ENCODE measurements at regions of chr10 and their contacts with region 1.

Region 1: DNA sequence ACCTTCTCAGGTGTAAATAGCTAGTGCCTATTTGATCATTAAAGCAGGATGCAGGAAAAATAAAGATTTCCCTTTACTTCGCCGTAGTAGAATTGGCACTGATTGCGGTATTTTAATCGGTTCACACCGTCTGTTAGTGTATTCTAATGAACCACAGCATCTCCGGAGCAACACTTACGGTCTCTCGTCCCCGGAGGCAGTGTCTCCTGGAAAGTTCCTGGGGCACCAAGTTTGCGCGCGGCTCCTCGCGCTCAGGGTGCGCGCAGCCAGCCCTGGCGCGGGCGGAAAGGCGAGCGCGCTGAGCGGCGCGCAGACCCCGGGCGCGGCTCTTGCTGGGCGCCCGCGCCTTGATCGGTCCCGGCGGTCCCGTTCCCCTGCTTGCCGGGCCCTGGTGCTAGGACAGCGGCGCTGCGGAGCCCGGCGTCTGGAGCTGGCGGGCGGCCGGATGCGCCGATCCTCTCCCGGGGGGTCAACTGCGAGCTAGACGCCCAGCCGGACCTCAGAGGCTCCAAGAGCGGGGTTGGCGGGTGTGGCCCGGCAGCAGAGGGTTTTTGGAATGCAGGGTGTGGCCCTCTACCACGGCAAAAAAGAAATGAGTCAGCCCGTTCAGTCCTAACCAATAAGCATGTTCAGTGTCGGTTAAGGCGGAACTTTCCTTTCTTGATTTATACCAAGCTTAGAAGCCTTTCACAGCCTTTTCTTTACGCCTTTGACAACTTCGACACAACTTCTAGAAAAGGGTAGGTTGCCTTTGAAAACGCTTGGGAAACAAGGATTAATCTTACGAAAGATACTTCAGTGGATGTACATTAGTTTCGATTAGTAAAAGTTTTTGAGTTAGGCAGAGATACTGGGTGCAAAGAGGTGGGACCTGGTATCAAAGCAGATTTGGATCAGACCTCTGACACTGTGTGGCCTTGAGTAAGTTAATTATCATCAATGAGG is 166.8 kb upstream of the ASAH2 start:
- DNase-seq: peak; percentile 91
- H3K4me3 Mint-ChIP-seq: peak overlapping the region; percentile 83
- H3K27ac Mint-ChIP-seq: peak overlapping the region; percentile 91
- H3K4me1 Mint-ChIP-seq: peaks cover 11% of the 10 kb centered on the region
- H3K27me3 Mint-ChIP-seq: no peaks in the 10 kb centered on the region
- CTCF ChIP-seq: no peak

Region 2: DNA sequence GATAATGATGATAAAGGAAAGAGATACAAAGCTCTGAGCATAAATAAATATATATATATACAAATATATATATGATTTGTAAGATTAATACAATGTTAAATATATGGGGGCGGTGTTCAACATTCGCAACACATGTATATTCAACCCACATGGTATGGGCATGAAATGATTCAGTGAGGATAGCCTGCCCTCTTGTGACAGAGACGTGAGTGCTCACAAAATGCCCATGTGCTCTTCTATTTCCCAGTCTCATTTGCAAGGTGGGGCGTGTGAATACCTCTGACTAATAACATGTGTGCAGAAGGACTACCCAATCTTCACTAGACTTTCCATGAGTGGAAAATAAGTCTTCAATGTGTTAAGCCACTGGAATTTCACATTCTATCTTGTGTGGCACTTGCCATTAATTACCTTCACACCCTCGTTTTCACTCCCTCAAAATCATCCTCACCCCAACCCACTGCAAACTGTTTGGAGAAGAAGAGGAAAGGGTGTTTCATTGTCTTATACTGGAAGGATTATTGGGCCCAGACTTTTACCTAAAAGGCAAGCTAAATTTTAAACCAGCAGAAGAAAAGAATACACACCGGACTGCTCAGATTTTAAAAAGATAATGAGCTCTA is 193.7 kb before region 1 on chr10:
- CTCF ChIA-PET with region 1: interaction called, 4 read pairs
- POLR2A ChIA-PET with region 1: no interaction called
- intact Hi-C with region 1: loop called (anchors 2 kb)
- DNase-seq: peak; percentile 84
- H3K4me3 Mint-ChIP-seq: no peak overlapping the region
- H3K27ac Mint-ChIP-seq: no peak overlapping the region
- H3K4me1 Mint-ChIP-seq: no peaks in the 10 kb centered on the region
- H3K27me3 Mint-ChIP-seq: peaks cover 46% of the 10 kb centered on the region
- CTCF ChIP-seq: peak; percentile 65

Region 3: GRCh38 chr10:50291261-50291850 is 126.8 kb before region 1 on chr10:
- CTCF ChIA-PET with region 1: interaction called, 3 read pairs
- POLR2A ChIA-PET with region 1: interaction called, 3 read pairs
- intact Hi-C with region 1: loop called (anchors 1 kb)
- DNase-seq: peak; percentile 31
- H3K4me3 Mint-ChIP-seq: no peak overlapping the region
- H3K27ac Mint-ChIP-seq: no peak overlapping the region
- H3K4me1 Mint-ChIP-seq: peaks cover 4% of the 10 kb centered on the region
- H3K27me3 Mint-ChIP-seq: no peaks in the 10 kb centered on the region
- CTCF ChIP-seq: peak; percentile 29

Region 4: DNA sequence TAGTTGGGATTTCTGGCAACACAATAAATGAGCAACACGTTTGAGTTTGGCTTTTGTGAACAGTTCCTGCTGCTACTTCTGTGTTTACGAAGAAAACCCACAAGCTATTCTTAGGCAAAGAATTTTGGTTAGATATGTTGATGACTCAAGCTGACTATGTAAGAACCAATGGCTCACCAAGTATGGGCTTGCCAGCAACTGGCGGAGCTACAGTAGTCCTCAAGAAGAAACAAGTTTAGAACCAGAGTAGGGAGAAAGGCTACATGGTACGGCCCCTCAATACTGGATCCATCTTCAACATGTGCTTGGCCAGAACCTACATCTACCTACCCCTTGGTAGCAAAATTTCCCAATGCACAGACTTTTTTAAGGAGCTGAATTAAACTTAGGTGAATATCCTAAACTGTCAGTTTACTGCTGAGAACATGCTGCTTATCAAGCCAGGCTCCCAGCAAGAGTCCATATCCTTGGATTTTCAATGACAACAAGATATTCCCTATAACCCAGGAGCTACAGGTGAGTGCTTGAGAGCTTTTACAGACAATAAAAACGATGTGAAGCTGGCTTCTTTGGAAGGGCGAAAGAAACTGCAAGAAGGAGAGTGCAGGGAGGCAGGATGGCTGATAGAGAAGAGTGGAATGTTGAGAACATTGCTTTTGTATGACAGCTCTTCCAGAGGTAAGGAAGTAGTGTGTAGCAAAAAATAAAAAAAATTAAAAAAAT is 92.5 kb before region 1 on chr10:
- CTCF ChIA-PET with region 1: interaction called, 4 read pairs
- POLR2A ChIA-PET with region 1: interaction called, 63 read pairs
- intact Hi-C with region 1: loop called (anchors 5 kb)
- DNase-seq: peak; percentile 93
- H3K4me3 Mint-ChIP-seq: peak overlapping the region; percentile 50
- H3K27ac Mint-ChIP-seq: peak overlapping the region; percentile 10
- H3K4me1 Mint-ChIP-seq: peaks cover 44% of the 10 kb centered on the region
- H3K27me3 Mint-ChIP-seq: no peaks in the 10 kb centered on the region
- CTCF ChIP-seq: no peak

Region 5: DNA sequence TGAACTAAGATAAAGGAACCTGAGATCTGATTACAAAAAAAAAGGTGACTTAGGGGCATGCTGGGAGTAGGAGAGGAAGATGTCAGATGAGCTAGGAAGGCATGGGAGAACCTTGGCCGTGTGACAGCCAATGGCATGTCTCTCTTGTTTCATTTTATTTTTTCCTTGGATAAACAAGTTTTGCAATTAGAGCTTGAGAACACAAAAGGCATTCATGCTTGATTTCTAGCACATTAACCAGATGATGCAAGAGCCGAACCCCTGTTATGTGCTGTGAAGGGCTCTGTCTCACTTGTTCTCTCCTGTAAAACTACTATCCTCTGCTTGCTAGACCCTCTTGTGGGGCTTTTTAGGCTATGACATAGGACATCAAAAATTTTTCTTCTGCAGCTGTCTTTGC is 32.5 kb before region 1 on chr10:
- CTCF ChIA-PET with region 1: interaction called, 4 read pairs
- POLR2A ChIA-PET with region 1: interaction called, 10 read pairs
- intact Hi-C with region 1: no loop called
- DNase-seq: peak; percentile 74
- H3K4me3 Mint-ChIP-seq: no peak overlapping the region
- H3K27ac Mint-ChIP-seq: peak overlapping the region; percentile 84
- H3K4me1 Mint-ChIP-seq: peaks cover 19% of the 10 kb centered on the region
- H3K27me3 Mint-ChIP-seq: no peaks in the 10 kb centered on the region
- CTCF ChIP-seq: no peak

Region 6: DNA sequence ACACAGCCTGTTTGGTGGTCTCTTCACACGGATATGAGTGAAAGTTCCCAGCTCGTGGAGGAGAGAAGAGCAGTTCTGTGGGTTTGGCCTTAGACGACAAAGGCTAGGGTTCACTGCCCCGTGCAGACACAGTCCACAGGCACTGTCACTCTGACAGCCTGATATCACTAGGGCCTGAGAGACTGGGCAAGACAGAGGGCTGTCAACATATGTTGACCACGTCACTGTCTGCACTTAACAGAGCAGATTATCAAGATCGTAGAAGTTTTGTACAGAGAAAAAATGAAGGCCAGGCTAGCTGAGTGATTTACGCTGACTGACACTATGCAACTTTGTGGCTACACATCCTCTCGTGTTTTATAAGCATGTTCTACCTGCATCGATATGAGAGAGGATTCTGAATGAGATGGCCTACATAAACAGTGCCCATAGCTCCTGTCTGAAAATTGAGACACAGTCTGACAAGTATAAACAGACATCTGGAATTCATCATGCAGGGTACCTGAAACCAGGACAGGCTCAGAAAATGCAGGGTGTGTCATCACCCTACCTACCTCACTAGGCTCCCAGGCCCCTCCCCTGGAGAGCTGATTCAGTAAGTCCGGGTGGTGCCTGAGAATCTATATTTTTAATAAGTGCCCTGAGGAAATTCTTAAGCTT is 85.6 kb after region 1 on chr10:
- CTCF ChIA-PET with region 1: interaction called, 3 read pairs
- POLR2A ChIA-PET with region 1: interaction called, 15 read pairs
- intact Hi-C with region 1: no loop called
- DNase-seq: peak; percentile 79
- H3K4me3 Mint-ChIP-seq: no peak overlapping the region
- H3K27ac Mint-ChIP-seq: peak overlapping the region; percentile 10
- H3K4me1 Mint-ChIP-seq: peaks cover 23% of the 10 kb centered on the region
- H3K27me3 Mint-ChIP-seq: no peaks in the 10 kb centered on the region
- CTCF ChIP-seq: no peak